Endothelial cell of umbilical vein (primary cell): ENCODE measurements at regions of chr1 and their contacts with region 1.

Region 1: DNA sequence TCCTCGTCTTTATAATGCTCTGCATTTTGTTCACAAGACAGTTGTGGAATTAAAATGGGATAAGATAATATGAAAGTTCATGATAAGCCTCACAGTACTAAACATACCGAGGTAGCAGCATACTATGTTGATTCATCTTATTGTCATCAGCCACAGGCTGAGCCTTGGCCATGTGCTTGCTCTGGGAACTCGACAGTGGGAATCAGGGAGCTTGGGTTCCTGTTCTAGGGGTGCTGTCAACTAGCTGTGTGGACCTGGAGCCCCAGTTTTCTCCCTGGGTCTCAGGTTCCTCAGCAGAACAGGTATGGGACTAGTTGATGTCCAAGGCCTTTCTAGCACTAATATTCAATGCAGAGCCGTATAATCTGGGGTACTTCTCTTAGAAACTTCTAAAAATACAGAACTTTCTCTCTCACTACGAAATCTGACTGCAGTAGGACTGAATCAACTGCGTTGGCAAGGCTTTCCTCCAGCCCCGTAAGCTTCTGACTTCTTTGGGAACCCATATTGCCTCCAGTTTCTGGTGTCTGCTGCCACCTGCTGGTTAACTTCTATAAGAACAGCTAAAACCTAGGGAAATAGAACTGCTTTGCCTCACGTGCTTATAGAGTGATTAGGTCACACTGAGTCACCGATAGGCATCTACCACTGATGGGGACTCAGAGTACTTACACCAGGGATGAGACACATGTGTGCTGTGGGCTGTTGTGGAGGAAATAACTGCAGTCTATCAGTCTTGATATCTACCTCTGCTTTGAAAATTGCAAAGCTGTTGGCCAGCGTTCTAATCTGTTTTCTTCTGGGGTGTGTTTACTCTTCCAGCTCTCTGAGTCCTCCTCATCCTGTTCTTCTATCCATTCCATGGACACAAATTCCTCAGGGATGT is 110.9 kb downstream of the RGL1 start:
- DNase-seq: peak; percentile 97
- H3K4me3 ChIP-seq: no peak overlapping the region
- H3K27ac ChIP-seq: peak overlapping the region; percentile 59
- H3K4me1 ChIP-seq: peaks cover 32% of the 10 kb centered on the region
- H3K27me3 ChIP-seq: no peaks in the 10 kb centered on the region
- CTCF ChIP-seq: peak; percentile 68 to 74
- POLR2A ChIP-seq: peak; percentile 54

Region 2: GRCh38 chr1:183609313-183609712 is 306.6 kb before region 1 on chr1:
- CTCF ChIA-PET with region 1: interaction called, 40 read pairs
- POLR2A ChIA-PET with region 1: no interaction called
- dilution Hi-C with region 1: no loop called
- intact Hi-C with region 1: no loop called
- DNase-seq: peak; percentile 45
- H3K4me3 ChIP-seq: no peak overlapping the region
- H3K27ac ChIP-seq: no peak overlapping the region
- H3K4me1 ChIP-seq: peaks cover 16% of the 10 kb centered on the region
- H3K27me3 ChIP-seq: no peaks in the 10 kb centered on the region
- CTCF ChIP-seq: peak; percentile 47 to 50
- POLR2A ChIP-seq: no peak

Region 3: DNA sequence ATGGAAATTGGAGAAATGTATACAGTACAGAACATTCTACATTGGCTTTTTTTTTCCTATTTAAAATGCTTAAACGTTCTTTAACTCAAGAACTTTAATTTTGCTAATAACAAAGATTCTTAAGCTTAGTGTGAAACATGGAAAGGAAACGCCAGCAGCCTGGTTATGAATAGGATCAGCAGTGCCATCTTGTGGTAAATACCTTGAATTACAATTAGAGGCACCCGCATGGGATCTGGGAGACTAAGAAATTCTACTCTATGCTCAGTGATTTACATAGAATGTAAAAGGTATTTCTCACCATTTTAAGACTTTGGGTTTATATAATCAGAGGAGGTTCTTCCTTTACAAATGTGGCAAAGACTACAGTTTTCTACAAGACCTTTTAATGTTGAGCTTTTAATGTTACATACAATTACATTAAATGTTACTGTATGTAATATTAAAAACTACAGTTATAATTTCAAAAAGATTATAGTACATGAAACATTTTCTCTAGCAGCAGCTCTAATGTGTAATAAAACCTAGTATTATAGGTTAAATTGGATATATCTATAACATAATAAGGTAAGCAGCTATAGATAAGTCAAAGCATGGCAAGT is 230.7 kb before region 1 on chr1:
- CTCF ChIA-PET with region 1: interaction called, 150 read pairs
- POLR2A ChIA-PET with region 1: interaction called, 3 read pairs
- dilution Hi-C with region 1: no loop called
- intact Hi-C with region 1: loop called (anchors 1 kb)
- DNase-seq: peak; percentile 63
- H3K4me3 ChIP-seq: no peak overlapping the region
- H3K27ac ChIP-seq: no peak overlapping the region
- H3K4me1 ChIP-seq: no peaks in the 10 kb centered on the region
- H3K27me3 ChIP-seq: no peaks in the 10 kb centered on the region
- CTCF ChIP-seq: peak; percentile 41 to 55
- POLR2A ChIP-seq: no peak

Region 4: GRCh38 chr1:183783767-183784637 is 131.9 kb before region 1 on chr1:
- CTCF ChIA-PET with region 1: interaction called, 24 read pairs
- POLR2A ChIA-PET with region 1: no interaction called
- dilution Hi-C with region 1: no loop called
- intact Hi-C with region 1: no loop called
- DNase-seq: peak; percentile 90
- H3K4me3 ChIP-seq: no peak overlapping the region
- H3K27ac ChIP-seq: peak overlapping the region; percentile 8
- H3K4me1 ChIP-seq: peaks cover 21% of the 10 kb centered on the region
- H3K27me3 ChIP-seq: no peaks in the 10 kb centered on the region
- CTCF ChIP-seq: no peak
- POLR2A ChIP-seq: no peak

Region 5: GRCh38 chr1:183841950-183842794 is 73.7 kb before region 1 on chr1:
- CTCF ChIA-PET with region 1: interaction called, 19 read pairs
- POLR2A ChIA-PET with region 1: no interaction called
- dilution Hi-C with region 1: no loop called
- intact Hi-C with region 1: loop called (anchors 2 kb)
- DNase-seq: peak; percentile 80
- H3K4me3 ChIP-seq: peak overlapping the region in 1 of 3 experiments; percentile 28
- H3K27ac ChIP-seq: peak overlapping the region; percentile 74
- H3K4me1 ChIP-seq: peaks cover 53% of the 10 kb centered on the region
- H3K27me3 ChIP-seq: no peaks in the 10 kb centered on the region
- CTCF ChIP-seq: no peak
- POLR2A ChIP-seq: no peak

Region 6: DNA sequence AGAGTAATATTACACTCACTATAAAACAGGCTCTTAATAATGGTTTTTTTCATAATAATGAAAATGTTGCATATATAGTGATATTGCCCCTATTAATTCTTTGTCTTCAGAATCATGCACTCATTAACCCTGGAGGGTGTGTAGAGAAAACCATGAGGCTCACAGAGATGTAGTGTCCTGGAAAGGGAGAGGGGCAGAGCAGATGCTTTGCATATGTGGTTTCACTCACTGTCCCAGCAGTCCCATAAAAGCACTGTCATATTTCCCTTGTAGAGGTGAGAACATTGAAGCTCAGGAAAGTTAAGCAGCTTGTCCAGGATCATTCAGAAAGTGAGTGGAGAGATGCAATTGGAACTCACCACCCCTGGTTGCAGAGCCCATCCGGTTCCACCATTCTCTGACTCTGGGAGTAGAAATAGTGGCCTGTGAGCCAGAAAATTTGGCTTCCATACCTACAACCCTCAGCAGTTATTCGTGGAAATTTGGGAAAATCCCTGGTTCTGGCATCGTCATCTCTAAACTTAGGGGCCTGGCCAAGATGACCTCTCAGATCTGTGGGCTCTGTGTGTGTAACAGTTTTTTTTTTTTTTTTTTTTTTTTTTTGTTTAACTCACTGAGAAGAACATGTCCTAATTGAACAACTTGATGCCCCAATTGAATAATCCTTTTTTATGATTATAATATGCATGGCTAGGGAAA is 24.6 kb before region 1 on chr1:
- CTCF ChIA-PET with region 1: interaction called, 9 read pairs
- POLR2A ChIA-PET with region 1: no interaction called
- dilution Hi-C with region 1: no loop called
- intact Hi-C with region 1: loop called (anchors 1 kb)
- DNase-seq: no peak
- H3K4me3 ChIP-seq: no peak overlapping the region
- H3K27ac ChIP-seq: no peak overlapping the region
- H3K4me1 ChIP-seq: peaks cover 26% of the 10 kb centered on the region
- H3K27me3 ChIP-seq: no peaks in the 10 kb centered on the region
- CTCF ChIP-seq: no peak
- POLR2A ChIP-seq: no peak